ENCODE measurements at regions of chr13 and their contacts with region 1.

Region 1: GRCh38 chr13:31424117-31424729 is 224.4 kb downstream of the B3GLCT start:
- DNase-seq: peak; percentile 78
- ATAC-seq: peak; percentile 96 to 97

Region 2: GRCh38 chr13:30918662-30919405 is 505.4 kb before region 1 on chr13:
- intact Hi-C with region 1: no loop called
- DNase-seq: no peak
- ATAC-seq: no peak

Region 3: GRCh38 chr13:31105020-31105795 is 319.0 kb before region 1 on chr13:
- intact Hi-C with region 1: no loop called
- DNase-seq: no peak
- ATAC-seq: peak in 1 of 2 donors; percentile 16

Region 4: DNA sequence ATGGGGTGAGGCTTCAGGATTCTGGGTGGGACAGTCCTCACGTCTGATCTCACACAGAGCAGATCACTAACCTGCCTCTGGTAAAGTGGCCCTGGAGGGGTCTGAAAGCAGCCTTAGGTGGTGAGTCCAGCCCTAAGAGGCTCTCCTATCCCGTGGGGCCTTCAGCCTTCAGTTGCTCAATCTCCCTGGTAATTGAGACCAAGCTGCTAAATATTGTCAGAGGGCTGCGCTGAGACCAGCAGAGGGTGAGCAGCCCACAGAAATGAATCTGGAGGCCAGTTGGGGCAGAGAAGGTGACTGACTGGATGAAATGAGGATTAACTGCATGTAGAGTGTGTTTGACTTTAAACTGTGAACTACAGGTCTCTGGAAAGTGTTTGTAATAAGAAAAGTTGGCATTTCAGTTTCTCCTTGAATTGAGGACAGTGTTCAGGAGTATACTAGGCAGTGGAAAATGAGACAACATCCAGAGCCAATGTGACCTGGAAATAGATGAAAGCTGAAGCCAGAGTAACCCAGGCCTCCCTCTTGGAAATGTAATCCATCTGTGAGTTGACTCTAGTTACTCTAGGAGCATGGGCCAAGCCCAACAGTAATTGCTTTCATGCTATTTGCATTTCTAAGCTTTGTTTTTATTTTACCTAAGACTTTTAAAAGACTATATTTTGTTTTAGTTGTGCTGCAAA is 248.2 kb before region 1 on chr13:
- intact Hi-C with region 1: loop called in 1 of 2 experiments (anchors 5 kb)
- DNase-seq: no peak
- ATAC-seq: no peak

Region 5: GRCh38 chr13:31236211-31236786 is 187.9 kb before region 1 on chr13:
- intact Hi-C with region 1: loop called (anchors 1 to 10 kb)
- DNase-seq: no peak
- ATAC-seq: peak in 1 of 2 donors; percentile 38

Region 6: DNA sequence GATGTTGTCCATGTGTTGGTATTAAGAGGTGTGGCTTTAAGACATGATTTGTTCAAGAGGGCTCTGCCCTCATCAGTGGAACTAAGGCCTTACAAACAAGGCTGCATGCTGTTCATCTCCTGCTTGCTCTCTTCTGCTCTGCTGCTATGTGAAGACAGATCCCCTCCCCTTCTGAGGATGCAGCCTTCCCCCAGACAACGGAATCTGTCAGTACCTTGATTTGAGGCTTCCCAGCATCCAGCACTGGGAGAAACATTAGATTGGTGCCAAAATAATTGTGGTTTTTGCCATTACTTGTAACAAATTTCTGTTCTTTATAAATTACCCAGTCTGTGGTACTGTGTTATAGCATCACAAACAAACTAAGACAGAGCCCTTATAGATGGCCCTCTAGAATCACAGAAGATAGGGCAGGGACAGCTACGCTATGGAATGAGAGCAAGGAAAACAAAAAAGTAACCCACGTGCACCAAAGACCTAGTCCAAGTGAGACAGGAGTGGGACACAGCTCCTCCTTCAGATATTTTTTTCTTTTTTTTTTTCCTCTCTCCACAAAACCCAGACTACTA is 163.6 kb after region 1 on chr13:
- intact Hi-C with region 1: no loop called
- DNase-seq: no peak
- ATAC-seq: no peak